ENCODE measurements at regions of chr6 and their contacts with region 1.

Region 1: DNA sequence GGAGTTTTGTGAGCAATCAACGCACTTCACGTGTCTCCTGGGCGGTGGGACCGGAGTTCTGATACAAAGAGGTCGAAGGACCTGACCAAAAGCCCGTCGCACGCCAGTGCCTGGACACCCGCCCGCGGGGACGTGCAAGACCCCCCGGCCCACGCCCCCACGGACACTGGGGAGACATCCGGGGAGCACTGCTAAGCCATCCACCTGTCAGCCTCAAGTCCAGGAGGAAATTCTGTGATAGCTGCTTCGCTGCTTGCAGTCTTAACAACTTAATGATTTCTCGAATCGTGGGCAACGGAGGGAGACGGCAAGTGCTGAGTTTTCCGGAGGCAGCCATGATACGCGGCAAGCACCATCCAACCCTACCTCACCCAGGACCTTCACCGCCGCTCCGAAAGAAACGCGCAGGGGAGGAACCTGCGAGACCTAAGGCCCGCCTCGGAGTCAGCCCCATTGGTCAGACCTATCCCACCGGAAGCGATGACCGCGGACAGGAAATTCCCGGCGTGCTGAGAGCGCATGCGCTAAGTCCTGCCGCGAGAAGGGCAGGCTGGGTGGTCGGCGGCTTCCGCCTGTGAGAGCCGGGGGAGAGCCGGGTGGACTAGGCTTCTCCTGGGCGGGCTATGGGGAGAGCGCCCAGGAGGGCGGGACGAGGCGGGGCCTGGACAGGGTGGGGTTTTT is at the start of gene TFB1M:
- DNase-seq: peak; percentile 99
- H3K4me3 ChIP-seq: peak within 1 kb of the TSS; percentile 60 to 100 (median 97)
- H3K27ac ChIP-seq: peak within 1 kb of the TSS; percentile 90
- H3K4me1 ChIP-seq: peaks cover 46% of the 10 kb centered on the region
- H3K27me3 ChIP-seq: no peaks in the 10 kb centered on the region
- CTCF ChIP-seq: no peak
- POLR2A ChIP-seq: peak; percentile 85
- total RNA-seq, gene TFB1M: 30.2 and 35.5 TPM in 2 replicates

Region 2: GRCh38 chr6:154733012-154733625 is 581.1 kb before region 1 on chr6 and contains the start of gene SCAF8:
- CTCF ChIA-PET with region 1: interaction called, 5 read pairs
- POLR2A ChIA-PET with region 1: no interaction called
- dilution Hi-C with region 1: no loop called
- intact Hi-C with region 1: loop called (anchors 1 kb)
- DNase-seq: peak; percentile 81
- H3K4me3 ChIP-seq: peak within 1 kb of the TSS; percentile 74 to 96 (median 89)
- H3K27ac ChIP-seq: peak within 1 kb of the TSS; percentile 90
- H3K4me1 ChIP-seq: peaks cover 20% of the 10 kb centered on the region
- H3K27me3 ChIP-seq: no peaks in the 10 kb centered on the region
- CTCF ChIP-seq: peak; percentile 83 to 85
- POLR2A ChIP-seq: peak; percentile 84
- total RNA-seq, gene SCAF8: 37.4 and 37.8 TPM in 2 replicates

Region 3: DNA sequence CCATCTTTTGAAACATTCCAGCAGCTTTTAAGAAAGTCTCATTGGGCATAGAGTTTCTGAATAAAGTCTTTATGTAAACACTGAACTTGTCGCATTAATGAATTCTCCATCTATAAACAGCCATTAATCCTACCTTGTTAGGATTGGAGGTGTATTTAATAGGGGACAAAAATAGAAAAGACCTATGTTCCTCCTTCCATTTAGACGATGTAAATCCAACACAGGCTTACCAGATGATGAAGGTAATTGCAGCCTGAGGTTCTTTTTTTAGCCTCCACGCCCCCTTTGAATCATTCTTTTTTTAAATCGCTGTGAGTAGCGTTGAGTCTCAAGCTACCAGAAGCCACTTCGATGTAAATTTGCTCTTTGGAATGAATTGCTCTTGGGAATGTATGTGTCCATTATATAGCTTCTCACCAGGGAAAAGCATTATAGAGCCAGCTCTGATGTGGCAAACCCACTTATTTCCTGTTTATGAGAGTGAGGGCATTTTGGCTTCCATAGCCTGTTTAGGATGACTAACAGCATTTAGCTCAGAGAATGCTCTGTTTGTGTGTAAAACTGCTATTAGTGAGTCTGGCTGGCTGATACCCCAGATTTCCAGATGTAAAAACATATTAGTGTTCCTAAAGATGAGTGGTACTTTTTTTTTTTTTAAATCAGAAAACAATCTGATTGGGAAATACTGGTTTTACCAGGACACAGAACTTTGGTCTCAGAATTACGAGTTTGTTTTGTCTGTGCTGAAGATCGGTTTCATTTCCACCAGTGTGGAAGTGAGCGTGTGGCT is 125.3 kb before region 1 on chr6:
- CTCF ChIA-PET with region 1: no interaction called
- POLR2A ChIA-PET with region 1: no interaction called
- dilution Hi-C with region 1: no loop called
- intact Hi-C with region 1: loop called (anchors 1 kb)
- DNase-seq: peak; percentile 99
- H3K4me3 ChIP-seq: peak overlapping the region in 1 of 3 experiments; percentile 37
- H3K27ac ChIP-seq: peak overlapping the region; percentile 90
- H3K4me1 ChIP-seq: peaks cover 51% of the 10 kb centered on the region
- H3K27me3 ChIP-seq: no peaks in the 10 kb centered on the region
- CTCF ChIP-seq: no peak
- POLR2A ChIP-seq: peak; percentile 50

Region 4: DNA sequence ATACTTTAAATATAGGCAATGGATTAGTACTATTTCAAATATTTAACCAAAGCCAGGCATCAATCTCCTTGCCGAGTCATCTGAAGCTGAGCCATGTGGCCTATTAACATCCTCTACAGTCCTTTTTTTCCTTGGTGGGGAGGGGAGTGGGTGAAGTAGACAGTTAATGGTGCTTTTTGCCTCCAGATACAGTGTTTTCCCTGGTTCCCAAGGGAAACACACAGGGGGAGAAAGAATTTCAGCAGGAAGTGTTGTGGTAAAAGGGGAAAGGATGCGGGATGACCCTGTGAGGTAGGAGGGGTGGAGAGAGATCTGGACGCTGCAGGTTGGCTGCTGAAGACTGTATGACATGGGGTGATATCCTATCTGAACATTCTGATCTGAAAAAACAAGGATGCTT is 40.8 kb before region 1 on chr6:
- CTCF ChIA-PET with region 1: interaction called, 11 read pairs
- POLR2A ChIA-PET with region 1: no interaction called
- dilution Hi-C with region 1: no loop called
- intact Hi-C with region 1: loop called (anchors 1 kb)
- DNase-seq: peak; percentile 88
- H3K4me3 ChIP-seq: no peak overlapping the region
- H3K27ac ChIP-seq: peak overlapping the region; percentile 97
- H3K4me1 ChIP-seq: peaks cover 41% of the 10 kb centered on the region
- H3K27me3 ChIP-seq: no peaks in the 10 kb centered on the region
- CTCF ChIP-seq: no peak
- POLR2A ChIP-seq: no peak

Region 5: DNA sequence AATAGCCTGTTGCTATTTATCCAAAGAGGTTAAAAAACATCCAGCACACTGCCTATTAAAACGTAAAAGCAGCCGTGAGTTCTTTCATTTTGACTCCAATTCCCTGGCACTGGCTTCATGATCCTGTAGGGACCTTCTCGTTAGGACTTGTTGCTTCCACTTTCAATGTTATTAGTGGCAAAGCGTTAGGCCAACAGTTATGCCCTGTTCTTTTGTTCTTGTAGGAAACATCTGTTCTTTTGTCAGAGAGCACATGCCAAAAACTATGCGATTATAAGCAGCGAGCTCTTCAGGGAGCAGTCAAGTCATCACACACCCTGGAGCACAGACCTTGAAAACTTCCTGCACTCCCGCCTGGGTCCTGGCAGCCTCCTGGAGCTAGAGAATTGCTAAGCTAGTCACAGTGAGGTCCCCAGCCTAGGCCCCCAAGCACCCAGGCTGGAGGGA is 853.4 kb after region 1 on chr6:
- CTCF ChIA-PET with region 1: interaction called, 4 read pairs
- POLR2A ChIA-PET with region 1: no interaction called
- dilution Hi-C with region 1: no loop called
- intact Hi-C with region 1: loop called (anchors 10 kb)
- DNase-seq: peak; percentile 98
- H3K4me3 ChIP-seq: peak overlapping the region in 1 of 3 experiments; percentile 18
- H3K27ac ChIP-seq: peak overlapping the region; percentile 68
- H3K4me1 ChIP-seq: peaks cover 17% of the 10 kb centered on the region
- H3K27me3 ChIP-seq: no peaks in the 10 kb centered on the region
- CTCF ChIP-seq: no peak
- POLR2A ChIP-seq: peak; percentile 24